ENCODE measurements at regions of chr10 and their contacts with region 1.

Region 1: GRCh38 chr10:119608316-119609155 is 11.8 kb upstream of the TIAL1 start:
- DNase-seq: peak; percentile 35
- ATAC-seq: peak; percentile 97
- H3K4me3 ChIP-seq: no peak overlapping the region
- H3K27ac ChIP-seq: no peak overlapping the region
- H3K4me1 ChIP-seq: no peaks in the 10 kb centered on the region
- H3K27me3 ChIP-seq: no peaks in the 10 kb centered on the region; the same call in 1 of the 2 replicates
- CTCF ChIP-seq: peak; percentile 73
- POLR2A ChIP-seq: no peak
- RAD21 ChIP-seq: peak; percentile 75

Region 2: GRCh38 chr10:119575506-119575905 is 33.0 kb before region 1 on chr10:
- CTCF ChIA-PET with region 1: no interaction called
- POLR2A ChIA-PET with region 1: no interaction called
- dilution Hi-C with region 1: no loop called
- in situ Hi-C with region 1: no loop called
- intact Hi-C with region 1: no loop called
- DNase-seq: peak; percentile 34
- ATAC-seq: no peak
- H3K4me3 ChIP-seq: no peak overlapping the region
- H3K27ac ChIP-seq: no peak overlapping the region
- H3K4me1 ChIP-seq: no peaks in the 10 kb centered on the region
- H3K27me3 ChIP-seq: no peaks in the 10 kb centered on the region
- CTCF ChIP-seq: no peak
- POLR2A ChIP-seq: no peak
- RAD21 ChIP-seq: no peak

Region 3: GRCh38 chr10:119650692-119651513 is 42.4 kb after region 1 on chr10 and contains the start of gene BAG3:
- CTCF ChIA-PET with region 1: no interaction called
- POLR2A ChIA-PET with region 1: no interaction called
- dilution Hi-C with region 1: no loop called
- in situ Hi-C with region 1: no loop called
- intact Hi-C with region 1: loop called (anchors 1 kb)
- DNase-seq: peak; percentile 92
- ATAC-seq: peak; percentile 87
- H3K4me3 ChIP-seq: peak within 1 kb of the TSS; percentile 71
- H3K27ac ChIP-seq: peak within 1 kb of the TSS; percentile 89
- H3K4me1 ChIP-seq: peaks cover 11% of the 10 kb centered on the region
- H3K27me3 ChIP-seq: no peaks in the 10 kb centered on the region
- CTCF ChIP-seq: no peak
- POLR2A ChIP-seq: peak; percentile 97
- RAD21 ChIP-seq: no peak
- total RNA-seq, gene BAG3: 5.4 and 5.8 TPM in 2 replicates

Region 4: DNA sequence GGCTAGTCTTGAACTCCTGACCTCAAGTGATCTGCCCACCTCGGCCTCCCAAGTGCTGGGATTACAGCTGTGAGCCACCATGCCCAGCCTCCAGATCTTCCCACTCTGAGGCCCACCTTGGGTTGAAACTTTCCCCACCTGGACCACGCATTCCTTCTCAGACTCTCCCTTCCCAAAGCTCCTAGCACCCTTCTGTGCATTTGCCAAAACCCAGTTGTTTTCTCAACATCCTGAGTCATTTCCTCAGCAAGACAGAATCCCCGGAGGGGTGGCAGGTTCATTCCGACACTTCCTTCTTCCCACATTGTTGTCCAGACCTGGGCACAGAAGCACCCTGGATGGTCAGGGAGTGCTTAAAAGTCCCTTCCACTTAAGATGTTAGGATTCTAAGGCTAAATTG is 71.5 kb after region 1 on chr10:
- CTCF ChIA-PET with region 1: interaction called, 3 read pairs
- POLR2A ChIA-PET with region 1: no interaction called
- dilution Hi-C with region 1: no loop called
- in situ Hi-C with region 1: no loop called
- intact Hi-C with region 1: loop called (anchors 2 kb)
- DNase-seq: peak; percentile 82
- ATAC-seq: peak; percentile 33
- H3K4me3 ChIP-seq: no peak overlapping the region
- H3K27ac ChIP-seq: no peak overlapping the region
- H3K4me1 ChIP-seq: peaks cover 17% of the 10 kb centered on the region
- H3K27me3 ChIP-seq: no peaks in the 10 kb centered on the region
- CTCF ChIP-seq: no peak
- POLR2A ChIP-seq: 0 out of 2 replicates have a peak, but pooled peaks have one; percentile 43
- RAD21 ChIP-seq: no peak

Region 5: DNA sequence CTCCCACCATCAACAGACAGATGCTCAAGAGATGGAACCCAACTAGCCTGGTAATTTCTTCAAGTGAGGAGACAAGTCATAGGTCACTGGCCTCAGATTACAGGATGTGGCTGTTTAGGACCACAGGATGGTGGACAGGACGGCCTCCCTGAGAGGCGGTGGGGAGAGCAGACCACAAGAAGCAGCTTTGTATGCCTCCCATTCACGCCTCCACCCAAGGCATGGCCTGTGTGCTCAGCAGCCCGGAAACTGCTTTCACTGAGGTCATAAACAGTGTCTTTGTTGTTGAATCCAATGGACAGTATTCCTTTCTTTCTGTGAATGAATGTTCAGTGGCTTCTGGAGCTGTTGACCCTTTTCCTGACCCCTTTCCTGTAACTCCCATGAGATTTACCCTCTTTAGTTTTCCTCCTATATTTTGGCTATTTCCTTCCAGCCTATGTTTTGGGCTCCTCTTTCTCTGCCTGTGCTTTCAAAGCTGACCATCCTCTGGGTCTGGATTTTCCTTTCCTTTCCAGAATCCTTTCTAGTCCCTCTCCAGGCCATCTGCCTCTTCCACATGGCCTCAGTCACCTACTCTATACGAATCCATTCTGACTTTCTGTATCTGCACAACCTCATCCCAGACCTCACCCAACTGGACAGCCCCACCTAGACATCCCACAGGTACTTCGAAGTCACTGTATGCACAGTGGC is 84.9 kb after region 1 on chr10:
- CTCF ChIA-PET with region 1: no interaction called
- POLR2A ChIA-PET with region 1: no interaction called
- dilution Hi-C with region 1: no loop called
- in situ Hi-C with region 1: no loop called
- intact Hi-C with region 1: no loop called
- DNase-seq: no peak
- ATAC-seq: no peak
- H3K4me3 ChIP-seq: no peak overlapping the region
- H3K27ac ChIP-seq: no peak overlapping the region
- H3K4me1 ChIP-seq: no peaks in the 10 kb centered on the region
- H3K27me3 ChIP-seq: peaks cover 6% of the 10 kb centered on the region
- CTCF ChIP-seq: no peak
- POLR2A ChIP-seq: no peak
- RAD21 ChIP-seq: no peak

Measured in IMR-90 (cell line).